HCT116 (cell line): ENCODE measurements at regions of chr4 and their contacts with region 1.

Region 1: GRCh38 chr4:186808635-186809018 is 85.0 kb upstream of the FAT1 start:
- DNase-seq: peak; percentile 74
- ATAC-seq: peak; percentile 73
- H3K4me3 ChIP-seq: peak overlapping the region; percentile 20 to 48
- H3K27ac ChIP-seq: peak overlapping the region; percentile 76
- H3K4me1 ChIP-seq: peaks cover 78 to 100% of the 10 kb centered on the region in 2 experiments
- H3K27me3 ChIP-seq: no peaks in the 10 kb centered on the region
- CTCF ChIP-seq: no peak
- POLR2A ChIP-seq: no peak
- RAD21 ChIP-seq: no peak

Region 2: DNA sequence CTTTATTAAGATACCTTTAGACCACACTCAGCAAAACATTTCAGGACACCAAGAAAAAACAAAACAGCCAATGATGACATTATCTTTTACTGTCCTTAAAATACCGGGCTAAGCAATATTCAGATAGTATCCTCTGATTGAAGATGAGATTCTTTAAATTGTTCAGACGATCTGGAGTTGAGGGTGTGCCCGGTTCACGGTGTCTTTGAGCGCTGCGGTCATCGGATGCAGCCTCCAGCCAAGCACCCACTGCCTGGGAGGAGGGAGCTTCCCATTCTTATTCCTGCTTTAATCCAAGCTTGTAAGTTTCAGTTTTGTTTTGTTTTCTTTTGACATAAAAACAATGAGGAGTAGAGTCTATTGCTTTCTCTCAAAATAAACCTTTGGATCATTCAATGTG is 690.0 kb before region 1 on chr4:
- CTCF ChIA-PET with region 1: no interaction called
- POLR2A ChIA-PET with region 1: no interaction called
- RAD21 ChIA-PET with region 1: no interaction called
- intact Hi-C with region 1: no loop called
- DNase-seq: no peak
- ATAC-seq: no peak
- H3K4me3 ChIP-seq: no peak overlapping the region
- H3K27ac ChIP-seq: no peak overlapping the region
- H3K4me1 ChIP-seq: no peaks in the 10 kb centered on the region
- H3K27me3 ChIP-seq: no peaks in the 10 kb centered on the region
- CTCF ChIP-seq: no peak
- POLR2A ChIP-seq: no peak
- RAD21 ChIP-seq: no peak

Region 3: GRCh38 chr4:186765138-186765537 is 43.5 kb before region 1 on chr4:
- CTCF ChIA-PET with region 1: no interaction called
- POLR2A ChIA-PET with region 1: no interaction called
- RAD21 ChIA-PET with region 1: no interaction called
- intact Hi-C with region 1: loop called (anchors 2 kb)
- DNase-seq: peak; percentile 68
- ATAC-seq: peak; percentile 97
- H3K4me3 ChIP-seq: peak overlapping the region; percentile 1 to 38; a peak in 2 of 4 replicates
- H3K27ac ChIP-seq: peak overlapping the region; percentile 62
- H3K4me1 ChIP-seq: peaks cover 17 to 29% of the 10 kb centered on the region in 2 experiments
- H3K27me3 ChIP-seq: no peaks in the 10 kb centered on the region
- CTCF ChIP-seq: 0 out of 6 replicates have a peak, but pooled peaks of 1 of the 3 experiments have one; percentile 6
- POLR2A ChIP-seq: no peak
- RAD21 ChIP-seq: no peak

Region 4: GRCh38 chr4:186820391-186820891 is 11.8 kb after region 1 on chr4:
- CTCF ChIA-PET with region 1: interaction called, 3 read pairs
- POLR2A ChIA-PET with region 1: interaction called, 11 read pairs
- RAD21 ChIA-PET with region 1: no interaction called
- intact Hi-C with region 1: no loop called
- DNase-seq: peak; percentile 71
- ATAC-seq: peak; percentile 53
- H3K4me3 ChIP-seq: peak overlapping the region in 1 of 2 experiments; percentile 31; a peak in 2 of 4 replicates
- H3K27ac ChIP-seq: peak overlapping the region; percentile 81
- H3K4me1 ChIP-seq: peaks cover 66 to 86% of the 10 kb centered on the region in 2 experiments
- H3K27me3 ChIP-seq: no peaks in the 10 kb centered on the region
- CTCF ChIP-seq: no peak
- POLR2A ChIP-seq: no peak
- RAD21 ChIP-seq: no peak